ENCODE measurements at regions of chr3 and their contacts with region 1.

Region 1: GRCh38 chr3:126208618-126209256 is 28.4 kb upstream of the ALDH1L1 start:
- DNase-seq: peak; percentile 76
- ATAC-seq: peak; percentile 70
- H3K4me3 ChIP-seq: no peak overlapping the region
- H3K27ac ChIP-seq: peak overlapping the region; percentile 9; the same call in 1 of the 2 replicates
- H3K4me1 ChIP-seq: peaks cover 26 to 40% of the 10 kb centered on the region in 2 experiments
- H3K27me3 ChIP-seq: no peaks in the 10 kb centered on the region
- CTCF ChIP-seq: no peak
- POLR2A ChIP-seq: no peak
- RAD21 ChIP-seq: no peak

Region 2: DNA sequence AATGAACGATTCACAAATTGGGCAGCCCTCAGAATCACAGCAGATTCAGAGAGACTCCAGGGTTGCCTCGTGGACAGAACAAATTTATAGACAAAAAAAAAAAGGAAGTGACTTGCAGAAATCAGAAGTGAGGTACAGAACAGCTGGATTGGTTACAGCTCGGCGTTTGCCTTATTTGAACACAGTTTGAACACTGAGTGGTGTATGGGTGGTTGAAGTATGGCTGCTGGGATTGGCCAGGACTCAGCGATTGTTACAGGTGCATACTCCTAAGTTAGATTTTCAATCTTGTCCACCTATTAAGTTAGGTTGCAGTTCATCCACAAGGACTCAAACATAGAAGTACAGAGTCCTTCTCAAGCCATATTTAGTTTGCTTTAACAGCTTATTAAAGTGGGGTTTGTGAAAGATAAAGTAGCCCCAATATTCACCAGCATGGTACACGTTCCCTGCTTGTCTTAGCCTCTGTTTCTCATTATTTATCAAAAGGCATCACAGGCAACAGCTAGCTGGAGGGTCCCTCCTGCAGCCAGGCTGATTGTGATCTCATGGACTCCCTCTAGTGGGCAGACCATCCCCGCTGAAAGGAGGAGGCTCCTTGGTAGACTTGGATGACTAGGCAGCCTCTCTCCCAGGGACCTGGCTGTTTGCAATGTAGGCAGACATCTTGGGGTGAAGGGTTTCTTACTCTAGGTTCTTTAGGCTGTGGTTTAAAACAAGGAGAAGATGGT is 10.7 kb before region 1 on chr3:
- CTCF ChIA-PET with region 1: interaction called, 15 read pairs
- POLR2A ChIA-PET with region 1: interaction called, 3 read pairs
- RAD21 ChIA-PET with region 1: no interaction called
- intact Hi-C with region 1: no loop called
- DNase-seq: peak; percentile 67
- ATAC-seq: peak; percentile 100
- H3K4me3 ChIP-seq: no peak overlapping the region
- H3K27ac ChIP-seq: no peak overlapping the region
- H3K4me1 ChIP-seq: 0 out of 4 replicates have a peak, but pooled peaks cover 0 to 4% of the 10 kb centered on the region in 2 experiments
- H3K27me3 ChIP-seq: no peaks in the 10 kb centered on the region
- CTCF ChIP-seq: peak; percentile 72 to 82 (median 78)
- POLR2A ChIP-seq: no peak
- RAD21 ChIP-seq: peak; percentile 68

Region 3: GRCh38 chr3:126338790-126339288 is 130.1 kb after region 1 on chr3:
- CTCF ChIA-PET with region 1: no interaction called
- POLR2A ChIA-PET with region 1: no interaction called
- RAD21 ChIA-PET with region 1: no interaction called
- intact Hi-C with region 1: no loop called
- DNase-seq: no peak
- ATAC-seq: no peak
- H3K4me3 ChIP-seq: no peak overlapping the region
- H3K27ac ChIP-seq: no peak overlapping the region
- H3K4me1 ChIP-seq: no peaks in the 10 kb centered on the region
- H3K27me3 ChIP-seq: peaks cover 13% of the 10 kb centered on the region
- CTCF ChIP-seq: no peak
- POLR2A ChIP-seq: no peak
- RAD21 ChIP-seq: no peak